ENCODE measurements at regions of chr15 and their contacts with region 1.

Region 1: DNA sequence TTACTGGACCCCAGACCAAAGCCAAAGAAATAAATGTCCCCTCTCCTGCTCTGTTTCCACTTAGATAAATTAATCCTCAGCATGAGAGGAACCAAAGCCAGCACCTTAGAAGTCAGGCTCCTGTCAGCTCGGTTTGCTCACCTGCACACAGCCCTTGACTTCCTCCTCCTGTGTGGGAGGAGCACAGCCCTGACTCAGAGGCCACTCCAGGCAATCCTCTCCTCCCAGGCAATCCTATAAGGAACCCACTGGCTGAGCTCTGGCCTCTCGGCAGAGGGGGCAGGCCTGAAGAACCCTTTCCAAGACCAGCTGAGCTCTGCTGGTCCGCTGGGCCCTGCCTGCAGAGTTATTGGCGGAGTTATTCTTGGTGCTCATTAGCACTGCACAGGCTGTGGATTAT is 30.8 kb downstream of the LIPC start:
- DNase-seq: peak; percentile 62 to 74
- H3K4me3 ChIP-seq: no peak overlapping the region
- H3K4me3 Mint-ChIP-seq: peak overlapping the region; percentile 15
- H3K27ac Mint-ChIP-seq: peak overlapping the region; percentile 89
- H3K4me1 ChIP-seq: peaks cover 89% of the 10 kb centered on the region
- H3K4me1 Mint-ChIP-seq: peaks cover 73% of the 10 kb centered on the region
- H3K27me3 ChIP-seq: no peaks in the 10 kb centered on the region
- H3K27me3 Mint-ChIP-seq: no peaks in the 10 kb centered on the region
- CTCF ChIP-seq: no peak

Region 2: DNA sequence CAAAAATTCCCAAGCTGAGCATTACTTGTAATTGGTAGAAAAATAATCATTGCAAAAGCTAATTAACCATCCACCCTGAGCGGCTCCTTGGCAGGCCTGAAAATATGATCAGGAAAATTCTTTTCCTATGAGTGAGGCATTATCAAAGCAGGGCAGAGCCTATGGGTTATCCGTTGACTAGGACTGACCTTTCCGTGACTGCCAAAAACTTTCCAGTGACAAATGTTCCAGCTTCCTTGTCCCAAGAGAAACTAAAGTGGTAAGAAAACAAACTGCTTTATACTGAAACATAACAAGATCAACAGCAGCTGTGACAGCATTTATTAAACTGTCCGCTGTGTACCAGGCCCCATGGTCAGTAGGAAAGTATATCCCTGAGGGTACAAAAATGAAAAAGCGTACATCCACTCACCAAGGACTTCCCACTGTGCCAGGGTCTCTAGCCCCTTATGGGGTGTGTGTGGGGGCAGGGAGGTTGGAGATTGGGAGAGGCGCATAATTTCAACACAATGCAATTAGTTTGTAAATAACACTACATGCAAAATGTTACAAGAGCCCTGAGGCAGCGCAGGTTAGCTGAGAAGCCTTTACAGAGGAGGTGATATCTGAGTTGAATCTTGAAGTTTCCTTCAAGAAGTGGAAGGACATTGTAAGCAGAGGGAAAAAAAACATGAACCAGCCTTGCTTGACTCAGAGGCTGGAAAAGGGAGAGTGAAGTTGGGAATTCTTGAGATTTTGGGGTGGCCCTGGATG is 22.2 kb before region 1 on chr15:
- CTCF ChIA-PET with region 1: no interaction called
- POLR2A ChIA-PET with region 1: interaction called, 4 read pairs
- intact Hi-C with region 1: loop called (anchors 2 kb)
- DNase-seq: no peak
- H3K4me3 ChIP-seq: no peak overlapping the region
- H3K4me3 Mint-ChIP-seq: peak overlapping the region; percentile 13
- H3K27ac Mint-ChIP-seq: peak overlapping the region; percentile 51
- H3K4me1 ChIP-seq: peaks cover 85% of the 10 kb centered on the region
- H3K4me1 Mint-ChIP-seq: peaks cover 36% of the 10 kb centered on the region
- H3K27me3 ChIP-seq: no peaks in the 10 kb centered on the region
- H3K27me3 Mint-ChIP-seq: no peaks in the 10 kb centered on the region
- CTCF ChIP-seq: no peak

Region 3: DNA sequence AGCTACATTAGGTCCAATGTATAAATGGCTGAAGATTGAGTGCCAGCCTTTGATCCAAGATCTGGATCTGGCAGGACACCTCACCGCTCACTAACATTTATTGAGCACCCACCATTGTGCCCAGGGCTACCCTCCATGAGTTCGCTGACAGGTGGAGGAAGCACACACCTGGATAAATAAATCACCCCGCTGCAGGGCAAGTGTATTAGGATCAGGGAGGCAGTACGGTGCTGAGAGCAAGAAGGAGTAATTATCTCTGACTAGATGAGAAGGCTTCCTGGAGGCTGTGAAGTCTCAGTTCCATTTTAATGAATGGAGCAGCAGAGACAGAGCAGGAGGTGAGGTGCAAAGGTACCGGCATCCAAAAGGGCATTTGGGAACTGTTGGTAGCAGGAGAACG is 73.3 kb after region 1 on chr15:
- CTCF ChIA-PET with region 1: no interaction called
- POLR2A ChIA-PET with region 1: no interaction called
- intact Hi-C with region 1: no loop called
- DNase-seq: no peak
- H3K4me3 ChIP-seq: no peak overlapping the region
- H3K4me3 Mint-ChIP-seq: no peak overlapping the region
- H3K27ac Mint-ChIP-seq: peak overlapping the region; percentile 45
- H3K4me1 ChIP-seq: peaks cover 38% of the 10 kb centered on the region
- H3K4me1 Mint-ChIP-seq: peaks cover 51% of the 10 kb centered on the region
- H3K27me3 ChIP-seq: no peaks in the 10 kb centered on the region
- H3K27me3 Mint-ChIP-seq: no peaks in the 10 kb centered on the region
- CTCF ChIP-seq: no peak

Measured in Caco-2 (cell line).